Ovary (tissue), 10 donors: ENCODE measurements at regions of chr2 and their contacts with region 1.

Region 1: DNA sequence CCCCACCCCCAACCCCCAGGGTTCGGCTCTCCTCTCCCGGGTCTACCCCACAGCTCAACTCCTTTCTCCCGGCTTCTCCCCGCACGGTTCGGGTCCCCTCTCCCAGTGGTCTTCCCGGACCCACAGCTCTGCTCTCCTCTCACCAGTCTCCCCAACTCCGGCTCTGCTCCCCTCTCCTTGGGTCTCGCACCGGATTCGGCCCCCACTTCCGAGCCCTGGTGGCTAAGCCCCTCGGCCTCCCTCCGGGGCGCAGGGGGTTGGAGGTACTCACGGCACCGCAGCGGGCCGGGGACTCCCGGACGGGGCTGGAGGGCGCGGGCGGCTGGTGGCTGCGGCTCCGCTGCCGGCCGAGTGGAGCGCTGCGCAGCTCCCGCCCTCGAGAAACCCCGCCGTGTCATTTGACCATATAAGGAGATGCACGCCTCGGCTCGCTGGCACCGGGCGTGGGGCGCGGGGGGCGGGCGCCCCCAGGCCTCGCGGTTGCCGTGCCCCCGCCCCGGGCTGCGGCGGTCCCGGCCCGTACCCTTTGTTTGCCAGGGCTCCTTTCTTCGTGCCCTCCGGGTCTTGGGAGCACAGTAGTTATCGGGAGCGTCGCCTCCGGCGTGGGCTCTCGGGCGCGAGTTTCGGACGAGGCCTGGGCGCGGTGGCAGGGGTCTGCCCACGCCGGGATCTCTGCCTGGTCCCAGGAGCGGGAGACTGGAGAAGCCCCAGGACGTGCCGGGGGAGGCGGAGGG is at the start of gene FHL2:
- DNase-seq: peak; percentile 82 to 91 (median 86)
- H3K4me3 ChIP-seq: peak within 1 kb of the TSS; percentile 98
- H3K27ac ChIP-seq: peak within 1 kb of the TSS; percentile 86 to 98
- H3K4me1 ChIP-seq: peaks cover 4% of the 10 kb centered on the region
- H3K27me3 ChIP-seq: no peaks in the 10 kb centered on the region
- CTCF ChIP-seq: peak in 2 of 3 donors; percentile 48 to 72
- EP300 ChIP-seq: no peak
- POLR2A ChIP-seq: peak; percentile 81
- total RNA-seq, gene FHL2: 300 to 1,049 (median 495) TPM

Region 2: GRCh38 chr2:104862058-104862941 is 536.6 kb before region 1 on chr2:
- intact Hi-C with region 1: no loop called
- DNase-seq: no peak
- H3K4me3 ChIP-seq: no peak overlapping the region
- H3K27ac ChIP-seq: no peak overlapping the region
- H3K4me1 ChIP-seq: peaks cover 2% of the 10 kb centered on the region
- H3K27me3 ChIP-seq: peaks cover 5% of the 10 kb centered on the region
- CTCF ChIP-seq: no peak
- EP300 ChIP-seq: no peak
- POLR2A ChIP-seq: no peak

Region 3: DNA sequence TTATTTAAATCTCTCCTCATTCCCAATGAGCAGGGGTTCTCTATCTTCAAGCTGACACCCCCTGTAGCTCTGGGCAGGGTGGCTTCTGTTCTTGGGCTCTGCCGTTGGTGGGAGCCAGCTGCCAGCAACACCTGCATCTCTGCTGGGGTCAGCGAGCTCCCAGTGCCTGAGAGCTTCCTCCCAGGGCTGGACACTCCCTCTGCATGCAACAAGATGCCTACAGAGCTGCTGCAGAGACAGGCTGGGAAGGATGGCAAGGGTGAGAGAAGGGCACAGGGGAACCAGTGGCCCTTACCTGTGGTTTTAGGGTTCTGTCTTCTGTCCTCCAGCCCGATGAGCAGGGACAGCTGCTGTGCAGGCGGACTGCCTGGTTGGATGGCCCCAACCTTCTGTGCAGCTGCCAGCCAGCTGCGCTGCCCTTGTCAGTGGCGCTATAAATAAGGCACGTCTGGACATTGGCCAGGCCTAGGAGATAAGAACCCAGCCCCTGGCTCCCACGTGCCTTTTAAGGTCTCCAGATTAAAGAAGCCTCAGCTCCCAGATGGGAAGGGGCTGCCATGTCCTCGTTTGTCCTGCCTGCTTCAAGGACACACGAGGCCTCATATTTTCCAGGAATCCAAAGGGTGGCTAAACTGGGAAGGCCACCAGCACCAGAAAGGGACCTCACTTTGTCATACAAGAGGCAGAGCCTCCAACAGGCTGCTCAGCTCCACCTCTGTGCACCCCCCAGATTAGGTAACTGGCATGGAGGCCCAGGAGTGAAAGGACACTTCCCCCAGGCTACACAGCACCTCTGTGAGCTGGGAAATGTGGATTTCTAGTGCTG is 39.5 kb after region 1 on chr2:
- intact Hi-C with region 1: loop called in 1 of 4 experiments (anchors 5 kb)
- DNase-seq: peak; percentile 60 to 91 (median 82)
- H3K4me3 ChIP-seq: peak overlapping the region; percentile 27
- H3K27ac ChIP-seq: peak overlapping the region; percentile 26 to 90
- H3K4me1 ChIP-seq: peaks cover 14% of the 10 kb centered on the region
- H3K27me3 ChIP-seq: no peaks in the 10 kb centered on the region
- CTCF ChIP-seq: no peak
- EP300 ChIP-seq: no peak
- POLR2A ChIP-seq: no peak